Caco-2 (cell line): ENCODE measurements at regions of chr1 and their contacts with region 1.

Region 1: DNA sequence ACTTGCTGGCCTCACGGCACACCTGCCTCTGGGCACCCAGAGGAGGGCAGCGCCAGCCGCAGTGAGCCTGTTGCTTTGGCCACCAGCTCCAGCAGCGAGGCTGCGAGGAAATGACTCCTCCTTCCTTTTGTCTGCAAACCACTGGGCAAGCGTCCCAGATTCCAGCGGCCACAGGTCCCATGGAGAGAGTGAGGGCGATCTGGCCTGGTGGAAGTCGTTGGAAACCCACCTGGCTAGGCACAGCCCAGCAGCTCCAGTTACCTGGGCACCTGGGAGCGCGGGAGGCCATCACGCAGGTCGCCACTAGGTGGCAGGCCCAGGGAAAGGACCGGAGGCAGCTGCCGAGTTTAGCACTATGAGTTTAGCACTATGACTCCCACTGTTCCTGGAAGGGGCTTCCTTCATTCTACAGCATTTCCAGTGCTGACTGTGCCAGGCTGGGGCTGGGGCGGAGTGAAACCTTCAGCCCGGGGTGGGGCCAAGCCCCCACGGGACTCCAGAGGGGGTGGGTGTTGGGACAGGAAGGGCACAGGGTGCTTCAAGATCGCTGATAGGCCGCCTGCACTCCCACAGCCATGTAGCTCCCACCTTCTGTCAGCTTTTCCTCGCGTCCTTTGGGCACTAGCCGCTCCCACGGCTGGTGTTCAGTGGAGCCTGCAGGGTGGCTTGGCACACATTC is 1.1 kb upstream of the ESPN start:
- DNase-seq: peak; percentile 68 to 82
- H3K4me3 ChIP-seq: peak overlapping the region; percentile 24
- H3K4me3 Mint-ChIP-seq: peak overlapping the region; percentile 69
- H3K27ac Mint-ChIP-seq: no peak overlapping the region
- H3K4me1 ChIP-seq: peaks cover 21% of the 10 kb centered on the region
- H3K4me1 Mint-ChIP-seq: no peaks in the 10 kb centered on the region
- H3K27me3 ChIP-seq: peaks cover 1% of the 10 kb centered on the region
- H3K27me3 Mint-ChIP-seq: peaks cover 7% of the 10 kb centered on the region
- CTCF ChIP-seq: peak; percentile 70 to 85

Region 2: GRCh38 chr1:6393400-6394187 is 29.9 kb before region 1 on chr1 and contains the start of gene ACOT7:
- CTCF ChIA-PET with region 1: interaction called, 4 read pairs
- POLR2A ChIA-PET with region 1: interaction called, 10 read pairs
- intact Hi-C with region 1: no loop called
- DNase-seq: peak; percentile 84 to 88
- H3K4me3 ChIP-seq: peak within 1 kb of the TSS; percentile 63
- H3K4me3 Mint-ChIP-seq: peak within 1 kb of the TSS; percentile 79
- H3K27ac Mint-ChIP-seq: peak within 1 kb of the TSS; percentile 92
- H3K4me1 ChIP-seq: 0 out of 2 replicates have a peak, but pooled peaks cover 3% of the 10 kb centered on the region
- H3K4me1 Mint-ChIP-seq: peaks cover 5% of the 10 kb centered on the region
- H3K27me3 ChIP-seq: no peaks in the 10 kb centered on the region
- H3K27me3 Mint-ChIP-seq: no peaks in the 10 kb centered on the region
- CTCF ChIP-seq: peak in 1 of 2 experiments; percentile 24
- total RNA-seq, gene ACOT7: 179 and 221 TPM in 2 replicates

Region 3: GRCh38 chr1:6438047-6438525 is 14.6 kb after region 1 on chr1:
- CTCF ChIA-PET with region 1: interaction called, 39 read pairs
- POLR2A ChIA-PET with region 1: no interaction called
- intact Hi-C with region 1: loop called (anchors 2 kb)
- DNase-seq: peak; percentile 84 to 86
- H3K4me3 ChIP-seq: no peak overlapping the region
- H3K4me3 Mint-ChIP-seq: no peak overlapping the region
- H3K27ac Mint-ChIP-seq: no peak overlapping the region
- H3K4me1 ChIP-seq: no peaks in the 10 kb centered on the region
- H3K4me1 Mint-ChIP-seq: peaks cover 13% of the 10 kb centered on the region
- H3K27me3 ChIP-seq: no peaks in the 10 kb centered on the region
- H3K27me3 Mint-ChIP-seq: no peaks in the 10 kb centered on the region
- CTCF ChIP-seq: peak; percentile 88 to 89

Region 4: DNA sequence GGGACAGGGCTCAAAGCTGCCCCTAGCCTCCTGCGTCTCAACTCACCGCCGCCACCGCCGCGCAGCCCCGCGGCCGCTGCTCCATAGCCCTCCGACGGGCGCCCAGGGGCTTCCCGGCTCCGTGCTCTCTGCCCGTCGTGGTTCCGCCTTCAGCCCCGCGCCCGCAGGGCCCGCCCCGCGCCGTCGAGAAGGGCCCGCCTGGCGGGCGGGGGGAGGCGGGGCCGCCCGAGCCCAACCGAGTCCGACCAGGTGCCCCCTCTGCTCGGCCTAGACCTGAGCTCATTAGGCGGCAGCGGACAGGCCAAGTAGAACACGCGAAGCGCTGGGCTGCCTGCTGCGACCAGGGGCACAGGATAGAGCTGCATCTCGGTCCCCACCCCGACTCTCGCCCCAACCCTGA is 42.6 kb after region 1 on chr1 and contains the start of gene TNFRSF25:
- CTCF ChIA-PET with region 1: no interaction called
- POLR2A ChIA-PET with region 1: no interaction called
- intact Hi-C with region 1: no loop called
- DNase-seq: no peak
- H3K4me3 ChIP-seq: no peak within 1 kb of the TSS
- H3K4me3 Mint-ChIP-seq: no peak within 1 kb of the TSS
- H3K27ac Mint-ChIP-seq: no peak within 1 kb of the TSS
- H3K4me1 ChIP-seq: no peaks in the 10 kb centered on the region
- H3K4me1 Mint-ChIP-seq: no peaks in the 10 kb centered on the region
- H3K27me3 ChIP-seq: no peaks in the 10 kb centered on the region
- H3K27me3 Mint-ChIP-seq: no peaks in the 10 kb centered on the region
- CTCF ChIP-seq: no peak
- total RNA-seq, gene TNFRSF25: 15.0 and 16.3 TPM in 2 replicates